ENCODE measurements at regions of chr22 and their contacts with region 1.

Region 1: GRCh38 chr22:36387752-36388518 is at the start of gene MYH9:
- DNase-seq: peak; percentile 100
- ATAC-seq: peak; percentile 97
- total RNA-seq, gene MYH9: 180 TPM

Region 2: GRCh38 chr22:36323182-36323854 is 64.6 kb before region 1 on chr22:
- intact Hi-C with region 1: loop called (anchors 1 kb)
- DNase-seq: no peak
- ATAC-seq: peak; percentile 67

Region 3: GRCh38 chr22:36329254-36330078 is 58.5 kb before region 1 on chr22:
- intact Hi-C with region 1: loop called (anchors 2 kb)
- DNase-seq: peak; percentile 81
- ATAC-seq: peak; percentile 11

Region 4: DNA sequence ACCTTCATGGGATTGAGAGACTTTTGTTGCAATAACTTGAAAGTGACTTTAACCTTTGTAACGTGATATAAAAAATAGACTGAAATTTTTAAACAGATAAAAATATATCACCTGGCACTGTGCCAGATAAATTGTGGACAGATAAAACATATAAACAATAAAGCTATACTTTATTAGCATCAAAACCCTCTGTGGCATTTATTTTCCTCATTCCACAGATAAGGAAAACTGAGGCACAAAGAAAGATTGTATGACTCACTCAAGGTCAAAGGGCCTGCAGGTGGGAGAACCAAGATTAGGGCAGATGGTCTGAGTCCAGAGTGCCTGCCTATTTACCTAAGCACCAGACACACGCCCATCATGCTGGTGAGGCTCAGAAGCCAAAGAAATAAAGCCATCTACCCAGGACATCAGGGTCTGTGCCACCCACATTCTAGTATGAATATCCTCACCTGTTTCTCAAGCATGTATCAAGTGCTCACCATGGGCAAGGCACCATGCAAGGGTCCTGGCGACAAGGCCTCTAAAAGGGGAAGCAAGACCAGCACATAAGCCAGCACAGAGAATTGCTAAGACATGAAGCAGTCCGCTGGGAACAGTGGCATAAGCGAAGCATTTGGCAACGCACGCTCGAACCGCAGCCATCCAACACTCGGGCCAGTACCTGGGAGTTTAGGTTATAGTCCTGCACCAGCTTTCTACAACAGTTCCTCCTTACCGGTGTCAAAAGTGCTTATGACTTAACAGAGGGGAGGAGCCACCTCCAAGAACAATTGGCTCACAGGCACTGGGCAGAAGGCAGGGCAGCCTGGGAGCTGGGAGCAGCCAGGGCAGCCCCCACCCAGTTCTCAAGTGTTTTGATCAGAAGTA is 17.8 kb before region 1 on chr22:
- intact Hi-C with region 1: loop called (anchors 2 kb)
- DNase-seq: peak; percentile 70
- ATAC-seq: peak; percentile 57

Region 5: DNA sequence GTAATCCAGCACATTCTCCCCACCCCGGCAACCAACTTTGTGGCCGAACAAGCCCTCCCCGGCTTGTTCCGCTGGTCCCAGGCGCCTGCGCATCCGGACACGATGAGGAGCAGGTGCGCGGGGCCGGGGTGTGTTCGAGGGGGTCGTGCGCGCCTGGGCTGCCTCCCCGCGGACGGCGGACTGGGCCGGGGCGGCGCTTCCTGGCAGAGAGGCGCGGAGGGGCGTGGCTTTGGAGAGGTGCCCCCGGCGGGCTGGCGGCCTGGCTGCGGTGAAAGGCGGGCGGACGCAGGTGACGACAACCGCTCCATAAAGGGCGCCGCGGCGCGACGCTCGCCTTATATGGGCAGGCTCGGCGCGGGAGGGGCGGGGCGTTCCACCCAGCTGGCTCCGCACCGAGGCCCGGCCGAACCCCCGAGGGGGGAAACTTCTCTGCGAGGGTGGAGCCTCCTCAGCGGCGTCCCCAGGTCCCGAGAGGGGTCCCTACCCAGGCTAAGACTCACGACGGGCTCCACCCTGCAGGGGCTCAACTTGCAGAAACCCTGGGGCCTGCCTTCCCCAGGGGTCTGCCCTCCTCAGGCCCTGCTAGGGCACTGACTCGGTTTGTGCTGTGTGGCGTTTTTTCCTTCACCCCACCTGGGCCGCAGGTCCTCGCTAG is 67.1 kb after region 1 on chr22:
- intact Hi-C with region 1: loop called (anchors 1 kb)
- DNase-seq: peak; percentile 98
- ATAC-seq: peak; percentile 91

Region 6: DNA sequence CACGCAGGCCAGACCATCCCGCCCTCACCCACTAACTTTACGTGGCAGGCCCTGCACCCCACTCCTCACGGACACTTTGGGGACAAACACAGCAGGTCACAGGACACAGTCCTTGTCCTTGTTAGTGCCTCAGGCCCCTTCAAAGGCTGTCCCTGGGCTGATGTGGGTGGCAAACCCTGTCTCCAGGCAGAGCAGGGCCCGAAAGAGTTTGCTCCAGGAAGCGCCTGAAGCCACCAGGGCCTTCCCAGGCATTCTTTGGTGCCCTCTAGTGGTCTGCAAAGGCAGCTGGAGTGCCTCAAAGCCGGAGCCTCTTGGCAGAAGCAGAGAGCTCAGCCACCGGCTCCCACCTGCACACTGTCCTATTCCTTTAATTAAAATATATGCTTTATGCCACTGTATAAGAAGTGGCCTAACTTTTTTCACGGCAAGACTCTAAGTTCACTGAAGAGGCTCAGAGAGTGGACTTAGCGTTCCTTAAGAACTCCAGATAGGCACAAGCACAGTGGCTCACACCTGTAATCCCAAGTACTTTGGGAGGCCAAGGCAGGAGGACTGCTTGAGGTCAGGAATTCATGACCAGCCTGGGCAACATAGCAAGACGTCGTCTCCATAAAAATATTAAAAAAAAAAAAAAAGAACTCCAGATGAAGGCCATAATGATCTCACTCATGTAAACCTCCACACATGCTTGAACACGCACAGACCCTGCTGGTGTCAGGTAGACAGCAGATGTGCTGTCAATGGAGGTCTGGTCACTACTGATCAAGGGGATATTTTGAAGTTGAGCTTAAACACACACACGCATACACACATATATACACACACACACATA is 82.4 kb after region 1 on chr22:
- intact Hi-C with region 1: loop called (anchors 2 kb)
- DNase-seq: peak; percentile 82
- ATAC-seq: peak; percentile 77